Ovary (tissue), 10 donors: ENCODE measurements at regions of chr12 and their contacts with region 1.

Region 1: DNA sequence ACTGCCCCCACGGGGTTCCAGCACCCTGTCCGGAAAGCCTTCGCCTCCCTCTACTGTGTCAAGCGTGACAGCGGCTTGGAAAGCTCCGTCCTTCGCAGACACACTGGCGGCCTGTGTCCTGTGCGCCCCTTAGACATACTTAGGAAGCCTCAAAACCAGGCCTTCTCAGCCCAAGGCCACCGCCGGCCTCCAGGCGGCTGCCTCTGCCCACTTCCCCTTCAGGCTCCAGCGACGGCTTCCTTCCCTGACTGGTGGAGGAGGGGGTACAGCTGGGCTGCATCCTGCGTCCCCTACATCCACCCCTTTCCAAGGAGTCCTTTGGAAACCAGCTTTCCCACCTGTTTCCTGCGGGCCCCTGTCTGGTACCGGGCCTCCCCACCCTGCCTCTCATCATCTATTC is 2.5 kb upstream of the CACNA2D4 start:
- DNase-seq: no peak
- H3K4me3 ChIP-seq: no peak overlapping the region
- H3K27ac ChIP-seq: no peak overlapping the region
- H3K4me1 ChIP-seq: peaks cover 5% of the 10 kb centered on the region
- H3K27me3 ChIP-seq: no peaks in the 10 kb centered on the region
- CTCF ChIP-seq: no peak
- EP300 ChIP-seq: no peak
- POLR2A ChIP-seq: no peak

Region 2: DNA sequence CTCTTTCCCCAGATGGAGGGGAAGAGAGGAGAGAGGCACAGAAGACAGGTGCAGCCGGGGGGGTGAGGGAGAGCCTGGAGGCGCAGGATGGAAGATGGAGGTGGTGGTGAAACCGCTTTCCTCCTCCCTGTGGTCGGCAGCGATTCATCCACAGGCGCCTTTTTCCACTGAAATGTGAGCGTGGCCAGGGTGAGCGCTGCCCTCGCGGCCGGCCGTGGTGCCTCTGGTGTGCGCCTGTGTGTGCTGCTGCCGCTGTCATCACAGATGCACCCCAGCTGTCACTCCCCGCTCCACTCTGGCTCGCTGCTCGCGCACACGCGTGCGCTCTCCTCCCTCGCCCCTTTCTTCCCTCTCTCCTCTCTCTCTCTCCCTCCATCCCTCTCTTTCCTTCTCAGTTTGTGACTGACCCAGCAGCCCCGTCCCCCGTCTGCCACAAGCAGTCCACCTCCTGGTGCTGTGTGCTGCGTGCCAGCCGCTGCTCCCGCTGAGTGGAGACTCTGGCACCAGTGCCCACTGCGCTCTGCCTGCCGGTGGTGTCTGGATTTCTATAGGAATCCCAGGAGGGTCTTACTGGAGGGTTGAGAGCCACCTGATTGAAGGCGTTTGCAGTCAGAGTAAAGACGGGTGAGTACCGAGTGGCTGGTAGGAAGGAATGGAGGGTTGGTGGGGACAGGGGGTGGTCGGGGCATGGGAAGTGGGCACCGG is 100.6 kb before region 1 on chr12 and contains the start of gene LRTM2:
- intact Hi-C with region 1: loop called in 1 of 4 experiments (anchors 10 kb)
- DNase-seq: no peak
- H3K4me3 ChIP-seq: no peak within 1 kb of the TSS
- H3K27ac ChIP-seq: no peak within 1 kb of the TSS
- H3K4me1 ChIP-seq: no peaks in the 10 kb centered on the region
- H3K27me3 ChIP-seq: no peaks in the 10 kb centered on the region
- CTCF ChIP-seq: no peak
- EP300 ChIP-seq: no peak
- POLR2A ChIP-seq: no peak
- total RNA-seq, gene LRTM2: not detected

Region 3: DNA sequence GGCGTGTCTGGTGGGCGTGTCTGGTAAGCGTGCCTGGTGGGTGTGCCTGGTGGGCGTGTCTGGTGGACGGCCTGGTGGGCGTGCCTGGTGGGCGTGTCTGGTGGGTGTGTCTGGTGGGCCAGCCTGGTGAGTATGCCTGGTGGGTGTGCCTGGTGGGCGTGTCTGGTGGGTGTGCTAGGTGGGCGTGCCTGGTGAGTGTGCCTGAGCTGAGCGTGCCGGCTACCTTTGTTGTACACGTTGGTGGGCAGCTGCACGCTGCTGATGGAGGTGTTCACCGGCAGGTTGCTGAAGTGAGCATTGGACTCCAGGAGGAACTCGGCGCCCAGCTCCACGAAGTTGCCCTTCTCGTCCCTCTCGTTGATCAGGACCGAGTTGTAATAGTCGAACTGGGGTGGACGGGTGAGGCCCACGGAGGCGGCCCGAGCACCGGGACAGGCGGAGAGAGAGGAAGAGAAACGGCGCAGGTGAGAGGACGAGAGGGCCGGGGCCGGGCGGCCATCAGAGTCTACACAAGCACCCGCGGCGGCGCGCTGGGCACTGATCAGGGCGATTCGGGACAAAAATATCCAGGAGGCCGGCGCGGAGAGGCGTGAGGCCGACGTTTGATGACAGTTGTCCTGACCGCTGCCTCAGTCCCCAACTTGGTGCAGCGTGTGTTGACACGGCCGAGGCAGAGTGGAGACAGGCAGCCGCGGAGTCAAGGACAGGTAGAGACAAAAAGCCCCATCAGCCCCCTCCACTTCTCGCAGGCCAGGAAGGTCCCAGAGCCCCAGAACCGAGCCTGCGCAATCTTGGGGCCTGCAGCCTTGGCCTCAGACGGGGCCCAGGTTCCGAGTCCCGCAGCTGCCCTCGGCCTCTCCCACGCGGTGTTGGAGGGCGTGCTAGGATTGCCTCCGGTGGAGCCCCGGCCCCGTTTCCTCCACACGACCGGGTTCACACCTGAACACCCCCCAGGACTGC is 13.0 kb before region 1 on chr12:
- intact Hi-C with region 1: no loop called
- DNase-seq: peak in 1 of 5 donors; percentile 5
- H3K4me3 ChIP-seq: no peak overlapping the region
- H3K27ac ChIP-seq: no peak overlapping the region
- H3K4me1 ChIP-seq: peaks cover 3% of the 10 kb centered on the region
- H3K27me3 ChIP-seq: no peaks in the 10 kb centered on the region
- CTCF ChIP-seq: no peak
- EP300 ChIP-seq: no peak
- POLR2A ChIP-seq: no peak

Region 4: DNA sequence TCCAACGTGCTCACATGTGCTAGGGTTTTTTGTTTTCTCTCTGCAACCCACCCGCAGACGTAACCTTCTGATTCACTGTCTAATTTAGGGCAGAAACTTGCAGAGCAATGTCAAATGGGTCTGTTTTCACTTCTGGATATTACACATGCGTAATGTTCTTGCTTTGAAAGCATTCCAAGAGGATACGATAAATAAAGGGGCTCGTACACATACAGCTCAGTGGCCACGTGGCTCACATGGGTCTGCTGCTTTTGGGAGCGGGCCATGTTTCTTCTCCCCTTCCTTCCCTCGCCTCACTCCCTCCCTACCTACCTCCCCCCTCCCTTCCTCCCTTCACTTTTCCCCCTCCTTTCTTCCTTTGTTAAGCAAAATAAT is 155.2 kb after region 1 on chr12:
- intact Hi-C with region 1: no loop called
- DNase-seq: peak; percentile 39 to 68 (median 63)
- H3K4me3 ChIP-seq: no peak overlapping the region
- H3K27ac ChIP-seq: peak overlapping the region; percentile 12 to 54
- H3K4me1 ChIP-seq: peaks cover 8% of the 10 kb centered on the region
- H3K27me3 ChIP-seq: no peaks in the 10 kb centered on the region
- CTCF ChIP-seq: no peak
- EP300 ChIP-seq: no peak
- POLR2A ChIP-seq: no peak